Left ventricle myocardium superior (tissue), 1 donor: ENCODE measurements at regions of chr19 and their contacts with region 1.

Region 1: GRCh38 chr19:18328340-18329034 is 5.6 kb upstream of the LSM4 start:
- DNase-seq: peak; percentile 84
- ATAC-seq: peak; percentile 98

Region 2: DNA sequence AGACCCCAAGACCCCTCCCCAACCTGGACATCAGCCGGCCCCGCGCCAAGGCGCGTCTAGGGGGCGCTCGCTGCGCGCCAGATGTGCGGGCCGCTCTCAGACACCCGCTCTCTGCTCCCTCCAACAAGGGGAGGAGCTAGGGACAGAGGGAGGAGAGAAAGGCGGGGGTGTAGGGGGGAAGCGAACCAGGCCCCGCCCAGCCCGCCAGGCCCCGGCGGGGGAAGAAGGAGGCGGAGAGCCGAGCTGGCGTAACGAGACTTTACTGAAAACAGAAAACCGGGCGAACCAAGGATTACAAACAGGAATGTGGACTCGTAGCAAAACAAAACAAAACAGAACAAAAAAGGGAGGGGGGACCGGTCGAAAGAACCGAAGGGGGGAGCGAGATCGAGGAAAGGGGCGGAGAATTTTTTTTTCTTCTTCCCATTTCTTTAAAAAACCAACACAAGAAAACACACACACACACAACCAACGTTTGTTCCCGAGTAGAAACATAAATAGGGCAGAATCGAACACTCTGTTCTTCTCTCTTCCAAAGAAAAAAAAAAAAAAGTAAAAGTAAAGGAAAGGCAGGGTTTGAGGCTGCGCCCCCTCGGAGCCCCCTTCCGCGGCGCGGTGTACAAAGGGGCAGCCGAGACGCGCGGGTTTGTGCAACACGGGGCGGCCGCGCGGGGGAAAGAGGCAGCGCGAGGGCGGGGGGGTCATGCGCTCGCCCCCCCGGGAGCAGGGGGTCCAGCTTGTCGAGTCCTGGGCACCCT is 48.8 kb before region 1 on chr19:
- intact Hi-C with region 1: loop called (anchors 2 kb)
- DNase-seq: peak; percentile 94
- ATAC-seq: peak; percentile 75